ENCODE measurements at regions of chr5 and their contacts with region 1.

Region 1: DNA sequence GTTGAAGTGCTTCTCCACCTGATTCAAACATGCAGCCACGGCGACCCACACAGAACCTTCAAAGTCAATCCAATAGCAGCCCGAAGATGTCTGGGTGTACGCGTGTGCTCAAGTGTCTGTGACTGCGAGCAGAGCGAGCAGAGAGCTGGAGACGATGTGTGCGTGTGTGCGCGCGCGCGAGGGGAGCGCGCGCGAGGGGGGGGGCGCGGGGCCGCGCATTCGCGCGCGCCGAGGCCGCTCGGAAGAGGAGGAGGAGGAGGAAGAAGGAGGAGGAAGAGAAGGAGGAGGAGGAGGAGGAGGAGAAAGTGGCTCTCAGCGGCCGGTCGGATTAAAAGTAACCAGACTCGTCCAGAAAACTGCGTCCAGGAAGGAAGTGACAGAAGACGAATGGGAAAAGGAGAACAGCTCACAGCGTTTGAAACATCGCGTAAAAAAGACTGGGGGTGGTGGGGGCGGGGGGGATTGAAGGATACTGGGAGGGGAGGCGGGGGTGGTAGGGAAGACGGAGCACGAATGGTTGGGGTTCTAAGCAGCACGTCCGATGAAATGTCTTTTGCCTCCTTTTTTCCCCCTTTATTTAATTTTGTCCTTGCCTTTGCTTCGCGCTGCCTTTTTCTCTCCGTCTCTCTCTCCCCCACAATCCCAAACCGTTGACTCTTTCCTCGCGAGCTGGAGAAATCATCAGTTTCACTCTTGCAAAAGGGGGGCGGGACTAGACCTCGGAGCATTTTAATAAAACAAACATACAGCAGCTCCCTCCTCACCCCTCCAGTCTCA is at the start of gene MEF2C:
- DNase-seq: peak; percentile 92
- H3K4me3 ChIP-seq: peak within 1 kb of the TSS; percentile 57 to 80 (median 74)
- H3K27ac ChIP-seq: peak within 1 kb of the TSS; percentile 87 to 96 (median 91)
- H3K4me1 ChIP-seq: peaks cover 11 to 73% (median 57%) of the 10 kb centered on the region in 4 donors
- H3K27me3 ChIP-seq: no peaks in the 10 kb centered on the region
- CTCF ChIP-seq: no peak
- EP300 ChIP-seq: no peak
- POLR2A ChIP-seq: peak; percentile 45
- total RNA-seq, gene MEF2C: 20.8 to 34.3 (median 29.0) TPM

Region 2: GRCh38 chr5:88729084-88729828 is 154.0 kb before region 1 on chr5:
- intact Hi-C with region 1: loop called (anchors 5 kb)
- DNase-seq: no peak
- H3K4me3 ChIP-seq: no peak overlapping the region
- H3K27ac ChIP-seq: no peak overlapping the region
- H3K4me1 ChIP-seq: peaks cover 0 to 17% (median 8%) of the 10 kb centered on the region in 4 donors
- H3K27me3 ChIP-seq: no peaks in the 10 kb centered on the region
- CTCF ChIP-seq: peak; percentile 69 to 83 (median 82)
- EP300 ChIP-seq: no peak
- POLR2A ChIP-seq: no peak

Region 3: DNA sequence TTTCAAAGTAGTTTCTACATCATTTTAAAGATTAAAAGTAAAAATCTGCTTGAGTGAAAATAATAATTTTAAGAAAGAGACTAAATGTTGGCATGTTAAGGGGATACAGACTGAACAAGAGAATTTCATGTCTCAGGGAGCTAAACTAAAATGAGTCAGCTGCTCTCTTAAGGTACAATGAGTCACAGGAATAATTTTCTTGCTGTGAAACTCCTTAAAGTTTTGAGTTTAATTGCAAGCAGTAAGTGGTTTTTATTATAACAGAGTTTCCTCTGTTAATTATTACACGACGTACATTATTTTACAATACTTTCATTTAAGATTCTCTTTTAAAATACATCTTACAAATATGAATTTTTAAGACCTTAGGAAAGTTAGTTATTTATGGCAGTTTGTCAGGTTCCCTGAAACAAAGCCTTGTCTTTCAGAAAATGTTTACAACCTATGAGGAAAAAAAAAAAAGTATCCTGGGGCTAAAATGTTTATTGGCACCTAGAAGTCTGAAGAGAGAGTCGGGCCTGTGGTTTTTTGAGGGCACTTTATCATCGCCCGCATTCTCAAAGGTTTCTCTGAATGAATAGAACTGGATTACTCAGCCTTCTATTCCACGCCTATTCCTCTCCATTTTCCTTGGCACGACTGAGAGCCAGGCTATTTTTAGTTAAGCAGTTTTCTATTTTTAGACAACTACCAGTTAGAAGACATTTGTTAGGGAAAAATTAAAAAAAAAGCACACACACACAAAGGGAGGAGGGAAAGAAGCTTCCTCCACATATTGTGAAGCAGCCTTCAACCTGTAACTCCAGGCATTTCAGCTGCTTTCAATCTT is 97.6 kb before region 1 on chr5:
- intact Hi-C with region 1: loop called (anchors 10 kb)
- DNase-seq: no peak
- H3K4me3 ChIP-seq: peak overlapping the region in 3 of 4 donors; percentile 8 to 23 (median 12)
- H3K27ac ChIP-seq: peak overlapping the region; percentile 72 to 76 (median 76)
- H3K4me1 ChIP-seq: peaks cover 25 to 28% (median 25%) of the 10 kb centered on the region in 4 donors
- H3K27me3 ChIP-seq: no peaks in the 10 kb centered on the region
- CTCF ChIP-seq: no peak
- EP300 ChIP-seq: no peak
- POLR2A ChIP-seq: no peak

Region 4: DNA sequence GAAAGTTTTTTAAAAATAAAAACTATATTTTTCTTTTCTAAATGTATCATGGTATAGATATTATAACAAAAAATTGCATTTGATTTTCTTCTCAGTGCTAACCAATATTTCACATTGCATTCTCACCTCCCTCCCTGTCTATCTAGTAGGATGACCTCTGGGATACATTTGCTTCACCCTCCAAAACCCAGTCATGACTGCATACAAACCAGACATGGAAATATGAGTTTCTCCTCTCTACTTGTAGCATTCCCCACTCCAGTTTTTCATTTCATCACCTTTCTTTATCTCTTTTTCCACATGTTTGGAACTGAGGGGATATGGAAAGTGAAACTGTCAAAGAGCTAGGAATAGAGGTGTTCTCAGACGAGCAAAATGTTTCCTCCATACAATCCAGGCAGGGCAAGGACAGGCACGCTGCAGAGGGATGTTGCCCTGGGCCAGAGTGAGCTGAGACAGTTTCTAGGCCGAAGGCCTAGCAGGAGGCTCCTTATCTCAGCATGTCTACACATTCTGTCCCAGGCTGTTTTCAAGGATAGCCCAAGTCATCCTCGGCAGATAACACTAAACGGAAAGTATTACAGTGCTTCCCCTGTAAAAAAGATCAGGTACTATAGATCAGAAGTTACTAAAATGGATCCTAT is 46.9 kb before region 1 on chr5:
- intact Hi-C with region 1: loop called (anchors 2 kb)
- DNase-seq: no peak
- H3K4me3 ChIP-seq: peak overlapping the region; percentile 33 to 39 (median 36)
- H3K27ac ChIP-seq: peak overlapping the region; percentile 79 to 85 (median 82)
- H3K4me1 ChIP-seq: peaks cover 37 to 51% (median 38%) of the 10 kb centered on the region in 4 donors
- H3K27me3 ChIP-seq: no peaks in the 10 kb centered on the region
- CTCF ChIP-seq: no peak
- EP300 ChIP-seq: no peak
- POLR2A ChIP-seq: no peak